Activated CD4-positive, alpha-beta memory T cell treated with anti-CD3 and anti-CD28 coated beads, Interleukin-2, amount 10 ng/mL, durations not matched to agents 7 days and 5 days (primary cell): ENCODE measurements at regions of chr4 and their contacts with region 1.

Region 1: GRCh38 chr4:56435306-56435926 is at the start of gene PPAT:
- DNase-seq: peak; percentile 98
- H3K4me3 Mint-ChIP-seq: peak within 1 kb of the TSS; percentile 99
- H3K27ac Mint-ChIP-seq: peak within 1 kb of the TSS; percentile 96
- H3K4me1 Mint-ChIP-seq: peaks cover 56% of the 10 kb centered on the region
- H3K27me3 Mint-ChIP-seq: no peaks in the 10 kb centered on the region
- total RNA-seq, gene PPAT: 21.6 to 22.7 TPM

Region 2: DNA sequence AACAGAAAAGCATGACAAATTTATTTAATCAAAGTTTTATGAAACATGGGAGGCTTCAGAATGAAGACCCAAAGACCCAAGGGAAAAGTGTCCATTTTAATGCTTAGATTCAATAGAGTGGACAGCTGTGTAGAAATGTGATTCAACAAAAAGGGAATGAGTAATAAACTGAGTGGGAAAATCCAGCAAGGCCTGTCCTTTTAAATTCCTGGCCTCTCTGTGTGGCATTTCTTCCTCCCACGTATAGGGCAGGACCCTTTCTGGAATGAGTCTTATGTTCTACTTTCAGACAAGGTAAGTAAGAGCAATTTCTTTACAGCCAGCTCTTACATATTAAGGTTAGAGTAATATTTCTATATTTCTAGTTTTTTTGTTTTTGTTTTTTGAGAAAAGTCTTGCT is 62.6 kb before region 1 on chr4:
- CTCF ChIA-PET with region 1: no interaction called
- POLR2A ChIA-PET with region 1: no interaction called
- DNase-seq: no peak
- H3K4me3 Mint-ChIP-seq: no peak overlapping the region
- H3K27ac Mint-ChIP-seq: no peak overlapping the region
- H3K4me1 Mint-ChIP-seq: no peaks in the 10 kb centered on the region
- H3K27me3 Mint-ChIP-seq: no peaks in the 10 kb centered on the region

Region 3: DNA sequence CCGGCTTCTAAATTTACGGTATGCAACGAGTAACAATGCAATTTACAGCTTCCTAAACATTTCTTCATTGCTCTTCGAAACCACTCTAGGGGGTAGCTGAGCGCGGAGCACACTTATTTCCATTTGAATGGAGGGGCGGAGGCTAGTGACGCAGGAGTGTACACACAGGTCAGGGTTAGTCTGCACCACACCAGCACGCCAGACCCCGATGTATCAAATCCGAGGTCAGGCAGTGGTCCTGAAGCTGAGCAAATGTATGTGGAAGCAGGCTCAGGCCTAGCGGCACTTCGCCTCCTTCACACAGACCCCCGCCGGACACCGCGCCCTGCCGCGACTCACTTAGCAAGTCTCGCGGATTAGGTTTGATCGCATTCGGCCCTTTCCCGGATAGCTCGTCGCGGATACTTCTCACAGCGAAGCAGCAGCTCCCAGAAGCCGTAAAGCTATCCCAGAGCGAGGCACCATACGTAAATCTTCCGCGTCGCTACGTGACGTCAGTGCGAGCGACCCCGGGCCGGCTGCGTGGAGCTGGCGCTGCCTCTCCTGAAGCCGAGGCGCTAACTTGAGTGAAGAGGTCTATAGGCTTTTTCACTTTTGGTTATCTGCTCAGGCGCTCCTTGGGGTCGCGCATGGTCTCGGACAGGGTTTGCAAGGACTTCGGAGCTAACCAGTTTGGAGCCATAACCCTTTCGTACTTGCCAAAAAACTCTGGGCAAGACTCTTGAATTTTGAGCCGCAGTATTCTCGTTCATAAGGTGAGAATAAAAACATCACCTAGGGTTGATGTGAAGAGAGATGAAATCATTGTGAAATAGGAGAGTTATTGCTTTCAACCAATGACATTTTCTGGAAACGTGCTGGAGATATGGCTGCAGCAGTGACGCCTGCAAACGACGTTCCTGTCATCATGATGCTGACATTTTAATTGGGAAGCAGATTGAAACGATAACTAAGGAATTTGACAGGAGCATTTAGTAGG is 48.1 kb before region 1 on chr4 and contains the start of gene AASDH:
- CTCF ChIA-PET with region 1: interaction called, 24 read pairs
- POLR2A ChIA-PET with region 1: interaction called, 85 read pairs
- DNase-seq: peak; percentile 96
- H3K4me3 Mint-ChIP-seq: peak within 1 kb of the TSS; percentile 87
- H3K27ac Mint-ChIP-seq: peak within 1 kb of the TSS; percentile 98
- H3K4me1 Mint-ChIP-seq: peaks cover 38% of the 10 kb centered on the region
- H3K27me3 Mint-ChIP-seq: no peaks in the 10 kb centered on the region
- total RNA-seq, gene AASDH: 9.6 to 11.1 TPM

Region 4: DNA sequence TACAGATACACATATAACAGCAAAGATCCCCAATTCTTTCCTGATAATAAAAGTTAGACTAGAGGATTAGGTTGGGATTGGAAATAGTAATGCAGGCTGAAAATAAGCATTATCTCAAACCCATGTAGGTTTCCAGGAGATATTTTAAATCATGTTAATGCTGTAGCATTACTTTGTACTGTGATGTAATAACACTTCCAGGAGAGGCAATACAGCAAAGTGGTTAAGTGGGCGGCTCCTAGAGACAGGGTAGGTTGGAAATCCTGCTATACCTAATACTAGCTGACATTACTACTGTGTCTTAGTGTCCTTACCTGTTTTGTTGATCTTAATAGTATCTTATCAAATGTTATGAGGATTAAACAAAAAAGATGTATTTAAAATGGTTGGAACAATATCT is 10.3 kb after region 1 on chr4:
- CTCF ChIA-PET with region 1: interaction called, 8 read pairs
- POLR2A ChIA-PET with region 1: interaction called, 14 read pairs
- DNase-seq: no peak
- H3K4me3 Mint-ChIP-seq: no peak overlapping the region
- H3K27ac Mint-ChIP-seq: no peak overlapping the region
- H3K4me1 Mint-ChIP-seq: peaks cover 43% of the 10 kb centered on the region
- H3K27me3 Mint-ChIP-seq: no peaks in the 10 kb centered on the region

Region 5: DNA sequence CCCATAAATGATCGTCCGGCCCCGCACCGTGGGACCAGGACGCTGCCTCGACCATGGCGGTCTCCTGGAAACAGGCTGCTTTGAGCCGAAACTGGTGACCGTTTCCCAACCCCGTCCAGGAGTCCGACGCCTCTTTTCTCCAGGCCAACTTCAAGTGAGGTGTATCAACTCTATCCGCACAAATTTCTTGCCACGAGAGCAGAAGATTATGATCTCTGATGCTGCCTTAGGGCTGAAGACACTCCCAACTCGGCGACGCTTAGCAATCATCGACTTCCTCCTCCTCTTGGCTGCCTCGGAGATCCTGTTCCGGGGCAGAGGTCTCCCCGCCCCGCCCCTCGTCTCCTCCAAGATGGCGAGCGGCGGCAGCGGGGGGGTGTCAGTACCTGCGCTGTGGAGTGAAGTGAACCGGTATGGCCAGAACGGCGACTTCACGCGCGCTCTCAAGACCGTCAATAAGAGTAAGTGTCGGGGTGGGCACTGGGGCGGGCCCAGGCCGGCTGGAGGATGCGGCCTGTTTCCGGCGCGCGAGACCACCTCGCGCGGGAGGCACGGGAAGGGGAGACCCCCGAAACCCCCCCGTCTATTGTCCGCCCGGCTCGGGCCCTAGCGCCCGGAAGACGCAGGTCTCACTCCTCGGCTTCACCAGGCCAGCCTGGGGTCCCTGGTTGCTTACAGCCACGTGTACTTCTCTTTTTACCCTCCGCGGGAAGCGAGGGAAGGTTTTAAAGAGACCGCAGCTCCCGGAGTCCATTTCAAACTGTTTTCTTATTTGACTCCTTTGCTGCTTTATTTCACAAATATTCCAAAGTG is 32.1 kb after region 1 on chr4 and contains the start of gene SRP72:
- CTCF ChIA-PET with region 1: interaction called, 27 read pairs
- POLR2A ChIA-PET with region 1: interaction called, 87 read pairs
- DNase-seq: peak; percentile 91
- H3K4me3 Mint-ChIP-seq: peak within 1 kb of the TSS; percentile 94
- H3K27ac Mint-ChIP-seq: peak within 1 kb of the TSS; percentile 95
- H3K4me1 Mint-ChIP-seq: peaks cover 52% of the 10 kb centered on the region
- H3K27me3 Mint-ChIP-seq: no peaks in the 10 kb centered on the region
- total RNA-seq, gene SRP72: 140 to 142 TPM

Region 6: DNA sequence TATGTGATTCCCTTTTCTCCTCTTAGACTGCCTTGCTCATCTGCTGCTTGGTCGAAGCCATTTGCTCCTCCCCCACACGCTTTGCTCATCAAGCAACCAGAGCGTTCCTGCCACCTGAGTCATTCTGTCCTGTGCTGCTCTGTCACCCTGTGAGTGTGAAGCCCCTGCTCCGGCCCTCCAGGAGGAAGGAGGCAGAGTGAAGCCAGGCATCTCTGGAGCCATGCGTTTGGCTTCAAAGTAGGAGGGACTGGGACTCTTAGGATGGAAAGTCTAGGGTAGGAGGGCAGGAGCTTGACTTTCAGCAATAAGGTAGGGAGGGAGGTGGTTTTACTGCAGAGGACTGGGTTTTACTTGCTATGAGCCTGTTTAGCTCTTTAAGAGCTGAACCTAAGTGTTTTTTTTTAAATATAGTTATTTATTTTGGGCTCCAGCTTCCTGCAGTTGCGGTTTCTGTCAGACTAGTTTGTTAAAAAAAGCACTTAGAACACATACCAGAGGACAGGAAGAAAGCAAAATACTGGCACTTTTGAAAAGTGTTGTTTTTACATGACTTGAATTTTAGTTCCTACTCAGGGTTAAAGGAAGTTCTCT is 322.5 kb after region 1 on chr4:
- CTCF ChIA-PET with region 1: interaction called, 3 read pairs
- POLR2A ChIA-PET with region 1: interaction called, 14 read pairs
- DNase-seq: peak; percentile 82
- H3K4me3 Mint-ChIP-seq: peak overlapping the region; percentile 63
- H3K27ac Mint-ChIP-seq: peak overlapping the region; percentile 97
- H3K4me1 Mint-ChIP-seq: peaks cover 47% of the 10 kb centered on the region
- H3K27me3 Mint-ChIP-seq: peaks cover 7% of the 10 kb centered on the region